GM23248 (cell line): ENCODE measurements at regions of chr20 and their contacts with region 1.

Region 1: DNA sequence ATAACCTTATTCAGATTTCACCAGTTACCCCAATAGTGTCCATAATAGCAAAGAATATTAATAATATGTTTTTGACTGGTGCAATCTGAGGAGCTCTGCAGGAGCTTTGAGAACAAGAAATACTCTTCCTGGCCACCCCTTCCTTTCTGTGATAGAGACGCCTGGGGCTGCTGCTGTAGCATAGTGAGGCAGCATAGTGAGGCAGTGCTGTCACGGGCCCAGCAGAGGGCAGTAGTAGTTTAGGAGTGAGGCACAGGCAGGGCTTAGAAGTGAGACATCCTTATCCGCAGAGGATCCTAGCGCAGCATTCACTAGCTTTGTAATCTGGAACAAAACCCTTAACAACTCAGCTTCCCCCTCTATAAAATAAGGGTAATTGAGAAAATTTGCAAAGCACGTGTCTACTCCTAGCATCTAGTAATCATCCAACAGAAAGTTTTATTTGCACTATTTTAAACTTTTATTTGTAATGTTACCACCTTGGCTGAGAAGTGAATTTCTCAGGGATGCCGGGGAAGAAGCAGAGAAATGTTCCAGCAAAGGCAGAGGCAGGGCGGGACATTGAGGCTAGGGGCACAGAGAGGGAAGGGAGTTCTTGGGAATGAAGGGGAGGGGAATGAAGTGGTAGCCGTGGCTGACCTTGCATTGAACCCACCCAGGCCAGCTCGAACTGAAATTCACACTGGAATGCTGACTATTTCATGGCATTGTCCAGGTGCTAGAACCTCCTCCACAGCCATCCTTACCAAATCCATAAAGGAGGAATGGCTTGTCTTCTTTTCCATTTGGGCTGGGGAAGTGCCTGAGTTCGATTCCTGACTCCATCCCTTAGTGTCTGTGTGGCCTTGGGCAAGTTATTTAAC is 78.8 kb downstream of the CDS2 start:
- DNase-seq: peak; percentile 81
- H3K4me3 ChIP-seq: no peak overlapping the region
- H3K27ac ChIP-seq: no peak overlapping the region
- H3K4me1 ChIP-seq: no peaks in the 10 kb centered on the region
- H3K27me3 ChIP-seq: no peaks in the 10 kb centered on the region

Region 2: GRCh38 chr20:4766631-4767030 is 438.9 kb before region 1 on chr20:
- in situ Hi-C with region 1: no loop called
- DNase-seq: no peak
- H3K4me3 ChIP-seq: no peak overlapping the region
- H3K27ac ChIP-seq: no peak overlapping the region
- H3K4me1 ChIP-seq: no peaks in the 10 kb centered on the region
- H3K27me3 ChIP-seq: no peaks in the 10 kb centered on the region

Region 3: GRCh38 chr20:5426026-5426425 is 220.4 kb after region 1 on chr20:
- in situ Hi-C with region 1: no loop called
- DNase-seq: no peak
- H3K4me3 ChIP-seq: no peak overlapping the region
- H3K27ac ChIP-seq: no peak overlapping the region
- H3K4me1 ChIP-seq: no peaks in the 10 kb centered on the region
- H3K27me3 ChIP-seq: peaks cover 10% of the 10 kb centered on the region

Region 4: GRCh38 chr20:5448449-5449118 is 243.0 kb after region 1 on chr20:
- in situ Hi-C with region 1: loop called (anchors 10 kb)
- DNase-seq: peak; percentile 52
- H3K4me3 ChIP-seq: no peak overlapping the region
- H3K27ac ChIP-seq: no peak overlapping the region
- H3K4me1 ChIP-seq: no peaks in the 10 kb centered on the region
- H3K27me3 ChIP-seq: peaks cover 7% of the 10 kb centered on the region; the same call in 1 of the 2 replicates

Region 5: DNA sequence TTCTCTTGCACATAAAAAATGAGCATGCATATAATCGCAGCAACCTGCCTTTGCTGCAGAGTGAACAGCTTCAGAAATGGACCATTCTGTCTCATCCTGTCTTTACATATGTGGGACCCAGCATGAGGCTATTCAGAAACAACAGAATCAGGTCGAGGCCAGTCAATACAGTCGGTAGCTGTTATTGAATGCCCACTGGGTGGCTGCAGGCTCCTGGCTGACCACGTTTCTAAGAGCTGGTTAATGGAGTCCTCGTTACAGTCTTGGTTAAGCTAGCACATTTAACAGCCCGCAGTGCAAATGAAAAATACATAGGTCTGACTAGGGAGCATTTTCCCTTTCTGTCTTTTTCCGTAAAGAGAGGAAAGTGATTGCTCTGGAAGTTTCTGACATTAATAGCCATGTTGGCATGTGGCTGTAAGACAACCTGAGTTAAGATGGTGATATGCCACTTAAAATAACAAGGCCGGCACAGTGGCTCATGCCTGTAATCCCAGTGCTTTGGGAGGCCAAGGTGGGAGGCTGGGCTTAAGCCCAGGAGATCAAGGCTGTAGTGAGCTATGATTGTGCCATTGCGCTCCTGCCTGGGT is 619.6 kb after region 1 on chr20:
- in situ Hi-C with region 1: no loop called
- DNase-seq: no peak
- H3K4me3 ChIP-seq: no peak overlapping the region
- H3K27ac ChIP-seq: no peak overlapping the region
- H3K4me1 ChIP-seq: no peaks in the 10 kb centered on the region
- H3K27me3 ChIP-seq: no peaks in the 10 kb centered on the region

Region 6: GRCh38 chr20:6231551-6231950 is 1026.0 kb after region 1 on chr20:
- in situ Hi-C with region 1: no loop called
- DNase-seq: peak; percentile 21
- H3K4me3 ChIP-seq: no peak overlapping the region
- H3K27ac ChIP-seq: no peak overlapping the region
- H3K4me1 ChIP-seq: no peaks in the 10 kb centered on the region
- H3K27me3 ChIP-seq: no peaks in the 10 kb centered on the region